ENCODE measurements at regions of chr6 and their contacts with region 1.

Region 1: GRCh38 chr6:50816115-50816675 is 2.5 kb upstream of the TFAP2B start:
- DNase-seq: no peak
- ATAC-seq: peak; percentile 31
- H3K4me3 Mint-ChIP-seq: peak overlapping the region; percentile 87
- H3K27ac Mint-ChIP-seq: no peak overlapping the region
- H3K4me1 Mint-ChIP-seq: peaks cover 19% of the 10 kb centered on the region
- H3K27me3 Mint-ChIP-seq: peaks cover 52% of the 10 kb centered on the region
- CTCF ChIP-seq: no peak

Region 2: GRCh38 chr6:50862172-50862571 is 46.0 kb after region 1 on chr6:
- CTCF ChIA-PET with region 1: no interaction called
- POLR2A ChIA-PET with region 1: no interaction called
- intact Hi-C with region 1: no loop called
- DNase-seq: no peak
- ATAC-seq: no peak
- H3K4me3 Mint-ChIP-seq: no peak overlapping the region
- H3K27ac Mint-ChIP-seq: no peak overlapping the region
- H3K4me1 Mint-ChIP-seq: no peaks in the 10 kb centered on the region
- H3K27me3 Mint-ChIP-seq: no peaks in the 10 kb centered on the region
- CTCF ChIP-seq: no peak

Region 3: GRCh38 chr6:51350308-51350904 is 534.2 kb after region 1 on chr6:
- CTCF ChIA-PET with region 1: interaction called, 3 read pairs
- POLR2A ChIA-PET with region 1: interaction called, 11 read pairs
- intact Hi-C with region 1: no loop called
- DNase-seq: no peak
- ATAC-seq: no peak
- H3K4me3 Mint-ChIP-seq: no peak overlapping the region
- H3K27ac Mint-ChIP-seq: no peak overlapping the region
- H3K4me1 Mint-ChIP-seq: no peaks in the 10 kb centered on the region
- H3K27me3 Mint-ChIP-seq: no peaks in the 10 kb centered on the region
- CTCF ChIP-seq: no peak

Region 4: GRCh38 chr6:51753635-51754034 is 937.4 kb after region 1 on chr6:
- CTCF ChIA-PET with region 1: interaction called, 3 read pairs
- POLR2A ChIA-PET with region 1: no interaction called
- intact Hi-C with region 1: loop called (anchors 5 kb)
- DNase-seq: no peak
- ATAC-seq: no peak
- H3K4me3 Mint-ChIP-seq: no peak overlapping the region
- H3K27ac Mint-ChIP-seq: no peak overlapping the region
- H3K4me1 Mint-ChIP-seq: no peaks in the 10 kb centered on the region
- H3K27me3 Mint-ChIP-seq: peaks cover 3% of the 10 kb centered on the region
- CTCF ChIP-seq: no peak

Region 5: GRCh38 chr6:51855310-51856082 is 1039.3 kb after region 1 on chr6:
- CTCF ChIA-PET with region 1: no interaction called
- POLR2A ChIA-PET with region 1: no interaction called
- intact Hi-C with region 1: loop called (anchors 10 kb)
- DNase-seq: no peak
- ATAC-seq: no peak
- H3K4me3 Mint-ChIP-seq: no peak overlapping the region
- H3K27ac Mint-ChIP-seq: no peak overlapping the region
- H3K4me1 Mint-ChIP-seq: no peaks in the 10 kb centered on the region
- H3K27me3 Mint-ChIP-seq: peaks cover 18% of the 10 kb centered on the region
- CTCF ChIP-seq: peak; percentile 30

Region 6: GRCh38 chr6:51959744-51960383 is 1143.7 kb after region 1 on chr6:
- CTCF ChIA-PET with region 1: no interaction called
- POLR2A ChIA-PET with region 1: no interaction called
- intact Hi-C with region 1: loop called (anchors 1 kb)
- DNase-seq: peak; percentile 17
- ATAC-seq: no peak
- H3K4me3 Mint-ChIP-seq: no peak overlapping the region
- H3K27ac Mint-ChIP-seq: no peak overlapping the region
- H3K4me1 Mint-ChIP-seq: no peaks in the 10 kb centered on the region
- H3K27me3 Mint-ChIP-seq: peaks cover 1% of the 10 kb centered on the region
- CTCF ChIP-seq: no peak

Region 7: DNA sequence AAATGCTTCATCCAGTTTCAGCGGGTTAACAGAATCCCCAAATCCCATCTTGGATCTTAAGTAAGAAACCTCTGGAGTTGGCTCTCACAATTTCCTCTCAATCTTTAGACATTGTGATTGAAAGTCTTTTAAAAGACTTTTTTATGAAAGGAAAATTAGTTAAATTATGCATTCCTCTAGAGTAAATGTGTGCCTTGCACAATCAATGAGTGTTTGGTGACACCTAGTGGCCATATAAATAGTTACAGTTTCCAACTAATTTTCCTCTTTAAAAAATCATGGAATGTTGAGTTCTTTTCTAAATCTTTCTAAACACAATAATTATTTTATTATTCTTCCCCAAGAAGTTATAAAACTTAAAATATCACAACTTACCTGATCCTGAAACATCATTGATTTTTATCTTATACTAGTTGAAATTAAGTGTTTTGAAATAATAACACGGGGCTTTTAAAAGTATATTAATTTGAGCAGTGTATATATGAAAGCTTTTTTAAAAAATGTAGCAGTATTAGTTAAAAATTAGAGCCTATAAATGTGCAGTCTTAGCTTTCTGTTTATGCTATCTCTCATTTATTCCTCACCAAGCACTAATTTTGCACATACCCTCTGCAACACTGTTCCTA is 1204.9 kb after region 1 on chr6:
- CTCF ChIA-PET with region 1: interaction called, 8 read pairs
- POLR2A ChIA-PET with region 1: no interaction called
- intact Hi-C with region 1: loop called (anchors 1 kb)
- DNase-seq: no peak
- ATAC-seq: no peak
- H3K4me3 Mint-ChIP-seq: no peak overlapping the region
- H3K27ac Mint-ChIP-seq: no peak overlapping the region
- H3K4me1 Mint-ChIP-seq: peaks cover under 1% of the 10 kb centered on the region
- H3K27me3 Mint-ChIP-seq: peaks cover 7% of the 10 kb centered on the region
- CTCF ChIP-seq: peak; percentile 74

Region 8: GRCh38 chr6:52049252-52050050 is 1233.3 kb after region 1 on chr6:
- CTCF ChIA-PET with region 1: no interaction called
- POLR2A ChIA-PET with region 1: no interaction called
- intact Hi-C with region 1: loop called (anchors 1 kb)
- DNase-seq: no peak
- ATAC-seq: no peak
- H3K4me3 Mint-ChIP-seq: no peak overlapping the region
- H3K27ac Mint-ChIP-seq: no peak overlapping the region
- H3K4me1 Mint-ChIP-seq: no peaks in the 10 kb centered on the region
- H3K27me3 Mint-ChIP-seq: peaks cover 14% of the 10 kb centered on the region
- CTCF ChIP-seq: no peak